ENCODE measurements at regions of chr15 and their contacts with region 1.

Region 1: GRCh38 chr15:62847900-62848489 is 194.6 kb upstream of the TPM1 start:
- DNase-seq: peak; percentile 48
- H3K4me3 ChIP-seq: no peak overlapping the region
- H3K27ac ChIP-seq: no peak overlapping the region
- H3K4me1 ChIP-seq: peaks cover 23% of the 10 kb centered on the region
- H3K27me3 ChIP-seq: no peaks in the 10 kb centered on the region
- CTCF ChIP-seq: peak; percentile 71 to 81

Region 2: DNA sequence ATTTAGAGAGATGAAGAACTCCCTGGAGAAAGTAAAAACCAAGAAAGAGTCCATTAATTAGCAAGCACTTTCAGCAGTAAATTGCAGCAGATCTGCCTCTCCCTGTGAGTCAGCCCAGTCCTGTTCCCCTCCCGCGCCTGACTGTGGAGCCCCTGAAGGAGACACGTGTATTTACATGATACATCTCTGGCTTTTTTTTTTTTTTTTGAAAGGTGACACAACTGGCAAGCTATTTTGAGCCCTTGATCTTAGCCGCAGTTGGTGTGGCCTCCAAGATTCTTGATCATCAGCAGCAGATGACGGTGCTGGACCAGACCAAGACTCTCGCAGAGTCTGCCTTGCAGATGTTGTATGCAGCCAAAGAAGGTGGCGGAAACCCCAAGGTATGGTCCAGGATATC is 77.2 kb before region 1 on chr15:
- CTCF ChIA-PET with region 1: no interaction called
- dilution Hi-C with region 1: loop called (anchors 5 kb)
- in situ Hi-C with region 1: no loop called
- intact Hi-C with region 1: no loop called
- DNase-seq: peak; percentile 87
- H3K4me3 ChIP-seq: no peak overlapping the region
- H3K27ac ChIP-seq: peak overlapping the region; percentile 62
- H3K4me1 ChIP-seq: peaks cover 31% of the 10 kb centered on the region
- H3K27me3 ChIP-seq: no peaks in the 10 kb centered on the region
- CTCF ChIP-seq: no peak

Region 3: DNA sequence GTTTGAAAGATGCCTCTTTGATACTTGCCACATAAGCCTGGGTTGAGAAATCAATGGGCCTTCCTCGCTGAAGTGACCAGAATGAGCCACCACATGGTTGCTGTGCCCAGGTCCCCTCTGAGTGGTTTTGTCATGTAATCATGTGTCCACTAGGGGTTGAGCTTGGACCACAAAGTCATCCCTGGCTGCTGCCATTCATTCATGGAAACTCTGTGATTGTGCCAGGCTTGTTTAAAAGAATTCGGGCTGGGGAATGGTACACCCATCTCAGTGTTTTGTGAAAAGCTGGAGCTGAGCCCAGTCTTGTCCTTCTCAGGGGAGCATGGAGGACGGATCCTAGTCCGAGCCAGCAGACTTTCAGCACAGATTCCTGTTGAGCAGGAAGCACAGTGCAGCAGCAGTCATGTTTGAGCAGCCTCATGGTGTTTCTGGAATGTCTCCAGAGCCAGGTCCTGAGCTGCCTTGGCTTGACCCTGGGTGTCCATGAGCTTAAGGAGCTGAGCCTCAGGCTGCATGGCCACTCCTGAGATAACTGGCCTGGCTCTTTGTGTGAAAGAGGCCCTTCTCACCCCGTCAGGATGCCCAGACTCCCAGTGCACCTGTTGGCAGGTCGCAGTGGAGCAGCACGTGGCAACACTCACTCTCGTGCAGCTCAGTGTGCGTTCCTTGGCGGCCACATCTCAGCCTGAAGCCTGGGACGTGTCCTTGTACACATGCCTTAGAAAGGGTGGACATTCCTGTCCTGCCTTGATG is 65.8 kb before region 1 on chr15:
- CTCF ChIA-PET with region 1: interaction called, 7 read pairs
- dilution Hi-C with region 1: no loop called
- in situ Hi-C with region 1: no loop called
- intact Hi-C with region 1: loop called (anchors 2 kb)
- DNase-seq: peak; percentile 64
- H3K4me3 ChIP-seq: no peak overlapping the region
- H3K27ac ChIP-seq: no peak overlapping the region
- H3K4me1 ChIP-seq: peaks cover 10% of the 10 kb centered on the region
- H3K27me3 ChIP-seq: no peaks in the 10 kb centered on the region
- CTCF ChIP-seq: peak; percentile 79 to 81

Region 4: DNA sequence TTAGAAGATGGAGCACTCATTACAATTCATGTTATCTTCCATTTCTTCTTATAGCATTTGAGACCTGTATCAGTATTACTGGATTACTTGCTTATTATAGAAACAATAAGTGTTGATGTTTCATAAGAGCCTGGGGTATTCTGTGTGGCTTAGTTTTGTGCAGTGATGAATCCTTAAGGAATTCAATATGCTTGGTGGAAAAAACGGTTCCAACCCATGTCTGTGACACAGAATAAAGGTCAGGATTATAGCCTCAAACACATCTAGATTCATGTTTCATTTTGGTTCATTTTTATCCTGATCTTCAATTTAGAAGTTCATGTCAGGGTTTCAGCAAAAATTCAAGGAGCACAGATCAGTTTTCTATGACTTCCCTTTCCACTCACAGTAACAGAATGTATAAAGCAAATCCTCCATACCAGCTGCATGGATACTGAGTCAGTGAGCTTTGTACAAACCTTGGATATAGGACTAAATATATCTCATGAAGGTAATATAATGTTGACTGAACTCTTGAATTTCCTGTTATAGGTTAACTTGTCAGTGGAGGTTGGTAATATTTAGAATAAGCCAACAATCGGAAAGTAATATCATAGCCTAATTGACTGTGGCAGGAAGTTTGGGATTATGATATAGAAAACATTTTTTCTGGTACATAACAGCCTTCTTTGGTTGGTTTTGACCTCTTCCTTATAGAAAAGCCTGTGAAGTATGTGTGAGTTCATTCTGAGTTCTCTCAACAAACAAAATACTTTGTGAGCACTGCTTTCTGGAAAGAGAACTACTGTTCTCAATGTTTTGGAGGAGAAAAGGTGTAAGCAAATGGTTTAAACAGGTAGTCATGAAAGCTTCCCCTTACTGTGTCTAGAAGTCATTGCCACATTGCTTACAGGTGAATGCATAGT is 23.6 kb before region 1 on chr15:
- CTCF ChIA-PET with region 1: no interaction called
- dilution Hi-C with region 1: no loop called
- in situ Hi-C with region 1: no loop called
- intact Hi-C with region 1: no loop called
- DNase-seq: peak; percentile 63
- H3K4me3 ChIP-seq: no peak overlapping the region
- H3K27ac ChIP-seq: peak overlapping the region; percentile 40
- H3K4me1 ChIP-seq: peaks cover 16% of the 10 kb centered on the region
- H3K27me3 ChIP-seq: no peaks in the 10 kb centered on the region
- CTCF ChIP-seq: no peak

Region 5: DNA sequence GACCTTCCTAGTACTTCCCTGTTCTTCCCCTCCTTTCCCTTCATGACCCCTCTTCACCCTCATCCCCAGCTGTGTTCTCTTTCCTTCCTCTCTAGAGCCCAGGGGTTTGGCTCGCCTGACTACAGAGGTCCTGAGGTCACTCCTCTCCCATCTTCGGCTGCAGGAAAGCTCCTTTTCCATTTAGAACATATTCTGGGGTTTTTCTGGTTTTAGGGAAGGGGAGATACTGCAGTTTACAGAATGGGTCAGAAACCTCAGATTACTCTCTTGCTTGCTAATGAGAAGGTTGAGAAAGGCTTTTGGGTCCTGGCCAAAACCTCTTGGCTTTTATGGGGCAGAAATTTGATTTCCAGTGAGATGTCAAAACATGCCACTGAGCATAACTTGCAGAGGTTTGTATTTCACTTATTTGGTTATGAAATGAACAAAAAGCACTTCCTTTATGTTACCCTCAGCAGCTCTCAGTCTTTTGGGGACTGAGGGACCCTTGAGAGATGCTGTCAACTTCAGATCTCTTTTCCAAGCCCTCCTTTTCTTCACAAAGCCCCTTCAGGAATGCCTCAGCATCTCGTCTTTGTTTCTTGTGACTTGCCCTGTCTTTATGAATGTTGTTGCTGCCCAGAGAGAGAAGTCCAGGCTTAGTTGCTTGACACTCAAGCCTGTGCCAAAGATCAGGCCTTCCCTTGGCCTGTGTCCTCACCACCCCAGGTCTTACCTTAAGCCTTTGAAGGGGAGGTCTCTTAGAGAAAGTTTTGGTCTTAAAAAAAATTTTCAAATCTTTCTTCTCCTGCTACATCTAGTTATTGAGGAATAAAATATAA is 72.9 kb after region 1 on chr15:
- CTCF ChIA-PET with region 1: no interaction called
- dilution Hi-C with region 1: loop called (anchors 5 kb)
- in situ Hi-C with region 1: no loop called
- intact Hi-C with region 1: no loop called
- DNase-seq: peak; percentile 34
- H3K4me3 ChIP-seq: no peak overlapping the region
- H3K27ac ChIP-seq: no peak overlapping the region
- H3K4me1 ChIP-seq: peaks cover 7% of the 10 kb centered on the region
- H3K27me3 ChIP-seq: no peaks in the 10 kb centered on the region
- CTCF ChIP-seq: no peak

Region 6: DNA sequence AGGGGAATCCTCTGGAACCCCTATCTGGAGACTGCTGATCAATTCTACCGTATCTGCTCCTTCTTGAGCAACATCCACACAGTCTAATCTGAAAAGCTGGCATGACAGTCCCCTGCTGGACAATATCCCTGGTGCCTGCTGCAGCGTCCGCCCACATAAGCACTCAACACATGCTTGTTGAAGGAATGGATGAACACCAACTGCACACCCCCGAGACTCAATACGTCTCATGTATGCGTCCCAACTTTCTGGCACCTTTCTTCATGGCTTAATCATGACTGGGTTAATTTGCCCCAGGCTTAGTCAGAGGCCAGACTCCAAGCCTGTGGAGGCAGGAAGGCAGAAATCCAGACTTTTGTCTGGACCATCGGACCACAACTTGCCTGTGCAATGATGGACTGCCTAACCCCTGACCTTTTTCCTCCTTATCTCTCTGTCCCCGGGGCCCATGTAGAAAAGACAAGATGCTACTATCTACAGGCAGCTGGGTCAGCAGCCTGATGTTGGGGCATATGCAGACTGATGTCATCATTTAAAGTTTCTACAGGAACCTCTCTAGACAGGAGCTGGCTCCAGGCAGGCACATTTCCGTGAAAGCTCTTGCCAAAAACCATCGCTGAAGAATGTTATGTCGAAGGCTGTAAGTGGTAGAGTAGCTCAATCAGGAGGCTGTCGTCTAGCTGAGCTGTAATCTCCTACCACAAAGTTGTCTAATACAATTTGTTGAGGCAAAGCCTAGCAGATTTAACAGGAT is 80.4 kb after region 1 on chr15:
- CTCF ChIA-PET with region 1: no interaction called
- dilution Hi-C with region 1: loop called (anchors 5 kb)
- in situ Hi-C with region 1: no loop called
- intact Hi-C with region 1: loop called (anchors 1 kb)
- DNase-seq: peak; percentile 88
- H3K4me3 ChIP-seq: no peak overlapping the region
- H3K27ac ChIP-seq: peak overlapping the region; percentile 87
- H3K4me1 ChIP-seq: peaks cover 32% of the 10 kb centered on the region
- H3K27me3 ChIP-seq: no peaks in the 10 kb centered on the region
- CTCF ChIP-seq: peak; percentile 39 to 46

Region 7: GRCh38 chr15:63006032-63006878 is 158.3 kb after region 1 on chr15:
- CTCF ChIA-PET with region 1: no interaction called
- dilution Hi-C with region 1: no loop called
- in situ Hi-C with region 1: no loop called
- intact Hi-C with region 1: loop called (anchors 1 kb)
- DNase-seq: peak; percentile 31
- H3K4me3 ChIP-seq: no peak overlapping the region
- H3K27ac ChIP-seq: no peak overlapping the region
- H3K4me1 ChIP-seq: peaks cover 14% of the 10 kb centered on the region
- H3K27me3 ChIP-seq: no peaks in the 10 kb centered on the region
- CTCF ChIP-seq: no peak

Region 8: DNA sequence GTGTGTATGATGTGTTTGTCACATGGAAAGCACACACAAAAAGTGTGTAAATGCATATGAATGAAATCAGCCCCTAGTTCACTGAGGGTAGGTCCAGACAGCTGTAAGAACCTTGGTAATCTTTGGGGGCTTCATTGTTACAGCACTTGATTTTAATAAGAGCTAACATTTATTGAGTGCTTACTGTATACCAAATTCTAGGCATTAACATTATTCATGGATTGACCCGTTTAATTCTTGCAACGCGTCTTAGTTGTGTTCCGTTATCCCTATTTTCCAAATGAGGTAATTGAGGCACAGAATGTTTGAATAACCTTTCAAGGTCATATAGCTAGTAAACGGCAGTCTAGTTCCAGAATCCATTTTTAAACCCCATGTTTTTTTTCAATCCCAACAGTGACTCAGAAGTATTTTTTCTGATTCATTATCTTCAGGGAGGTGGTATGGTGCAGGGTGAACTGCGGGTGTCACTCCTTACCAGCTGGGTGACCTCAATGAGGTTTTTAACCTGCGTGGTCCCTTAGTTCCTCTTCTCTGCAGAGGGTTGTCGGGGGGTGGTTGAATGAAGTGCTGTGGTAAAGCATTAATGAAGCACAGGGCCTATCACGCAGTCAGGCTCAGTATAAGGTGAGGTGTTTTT is 355.6 kb after region 1 on chr15:
- CTCF ChIA-PET with region 1: no interaction called
- dilution Hi-C with region 1: no loop called
- in situ Hi-C with region 1: no loop called
- intact Hi-C with region 1: no loop called
- DNase-seq: no peak
- H3K4me3 ChIP-seq: no peak overlapping the region
- H3K27ac ChIP-seq: no peak overlapping the region
- H3K4me1 ChIP-seq: no peaks in the 10 kb centered on the region
- H3K27me3 ChIP-seq: no peaks in the 10 kb centered on the region
- CTCF ChIP-seq: no peak